Dendritic cell treated with granulocyte-macrophage colony-stimulating factor and Interleukin-4, amounts not matched to agents 40 ng/mL and 50 ng/mL, for 4 days (primary cell): ENCODE measurements at regions of chr2 and their contacts with region 1.

Region 1: DNA sequence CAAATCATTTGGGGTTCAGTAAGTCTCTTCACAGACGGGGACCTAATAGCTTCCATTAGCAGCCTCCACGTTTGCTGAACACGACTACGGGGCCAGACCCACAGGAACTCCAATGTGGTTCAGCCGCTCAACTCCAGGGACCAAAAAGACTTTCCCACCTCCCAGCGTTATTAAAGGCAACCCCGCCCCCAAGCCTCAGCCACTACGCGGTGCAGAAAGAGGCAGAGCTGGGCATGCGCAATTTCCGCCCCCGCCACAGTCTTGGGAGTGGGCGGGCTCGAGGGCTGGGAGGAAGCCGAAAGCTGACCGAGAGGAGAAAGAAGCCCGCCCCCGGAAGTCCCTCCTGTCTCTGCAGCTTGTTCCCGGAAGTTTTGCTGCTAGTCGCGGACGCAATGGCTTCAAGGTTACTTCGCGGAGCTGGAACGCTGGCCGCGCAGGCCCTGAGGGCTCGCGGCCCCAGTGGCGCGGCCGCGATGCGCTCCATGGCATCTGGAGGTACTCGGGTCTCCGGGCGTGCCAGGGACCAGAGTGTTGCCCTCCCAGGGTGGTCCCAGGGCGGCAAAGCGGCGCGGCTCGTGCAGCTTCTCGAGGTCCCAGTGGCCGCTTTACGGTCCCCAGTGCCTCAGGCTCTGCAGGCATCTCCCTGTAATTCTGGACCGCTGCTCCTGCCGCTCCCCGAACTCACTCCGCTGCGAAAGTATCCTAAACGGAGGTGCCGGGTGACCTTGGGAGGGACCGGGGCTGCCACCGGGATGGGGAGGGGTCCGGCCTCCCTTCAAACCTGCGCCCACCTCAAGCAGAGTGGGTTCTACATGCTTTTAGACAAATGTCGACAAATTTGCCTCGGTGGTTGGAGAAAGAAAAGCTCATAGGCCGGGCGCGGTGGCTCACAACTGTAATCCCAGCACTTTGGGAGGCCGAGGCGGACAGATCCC is at the start of gene COX5B:
- H3K4me3 Mint-ChIP-seq: peak within 1 kb of the TSS; percentile 92
- H3K27ac Mint-ChIP-seq: peak within 1 kb of the TSS; percentile 99
- H3K4me1 Mint-ChIP-seq: peaks cover 33% of the 10 kb centered on the region
- H3K27me3 Mint-ChIP-seq: peaks cover 2% of the 10 kb centered on the region

Region 2: GRCh38 chr2:97697252-97698235 is 51.6 kb after region 1 on chr2:
- intact Hi-C with region 1: loop called (anchors 2 kb)
- H3K4me3 Mint-ChIP-seq: peak overlapping the region; percentile 36
- H3K27ac Mint-ChIP-seq: no peak overlapping the region
- H3K4me1 Mint-ChIP-seq: peaks cover 15% of the 10 kb centered on the region
- H3K27me3 Mint-ChIP-seq: no peaks in the 10 kb centered on the region

Region 3: GRCh38 chr2:97730245-97730644 is 84.3 kb after region 1 on chr2:
- intact Hi-C with region 1: no loop called
- H3K4me3 Mint-ChIP-seq: no peak overlapping the region
- H3K27ac Mint-ChIP-seq: no peak overlapping the region
- H3K4me1 Mint-ChIP-seq: no peaks in the 10 kb centered on the region
- H3K27me3 Mint-ChIP-seq: no peaks in the 10 kb centered on the region